Activated CD8-positive, alpha-beta T cell treated with anti-CD3 and anti-CD28 coated beads, Interleukin-2, amount 10 ng/mL, durations not matched to agents 7 days and 5 days (primary cell): ENCODE measurements at regions of chr11 and their contacts with region 1.

Region 1: DNA sequence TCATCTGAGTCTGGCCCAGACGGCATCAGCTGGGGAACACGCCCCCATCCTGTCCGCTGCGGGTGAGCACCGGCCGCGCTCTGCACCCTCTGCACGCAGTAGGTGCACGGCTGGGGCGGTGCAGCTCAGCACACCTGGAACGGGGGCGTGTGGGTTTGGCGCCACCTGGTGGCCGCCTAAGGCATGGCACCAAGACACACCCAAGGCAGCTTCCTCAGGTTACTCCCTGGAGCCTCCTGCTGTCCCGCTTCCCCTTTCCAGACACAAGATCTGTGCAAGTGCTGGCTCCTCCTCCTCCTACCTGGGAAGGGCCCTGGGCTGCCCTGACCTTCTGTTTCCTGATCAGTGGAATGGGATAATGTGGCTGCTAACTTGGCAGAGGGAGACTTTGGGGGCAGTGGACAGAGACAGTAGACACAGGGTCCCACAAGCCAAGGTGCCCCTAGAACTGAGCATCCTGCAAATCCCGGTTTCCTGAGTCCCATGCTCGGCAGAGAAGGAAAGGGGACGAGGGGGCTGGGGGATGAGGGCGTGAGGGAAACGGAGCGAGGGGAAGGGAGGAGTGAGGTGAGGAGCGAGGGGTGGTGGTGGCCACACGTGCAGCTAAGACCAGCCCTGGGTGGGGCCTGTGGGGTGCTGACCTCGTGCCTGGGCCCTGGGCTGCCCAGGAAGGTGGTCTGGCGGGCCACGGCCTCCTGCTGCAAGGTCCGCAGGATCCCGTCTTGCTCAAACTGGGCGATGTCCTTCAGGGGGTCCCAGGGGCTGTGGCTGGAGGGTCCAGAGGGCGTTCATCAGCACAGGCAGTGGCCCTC is 34.8 kb upstream of the CARS1 start:
- DNase-seq: peak; percentile 80
- ATAC-seq: peak; percentile 91
- H3K4me3 Mint-ChIP-seq: no peak overlapping the region
- H3K27ac Mint-ChIP-seq: peak overlapping the region; percentile 57
- H3K4me1 Mint-ChIP-seq: peaks cover 12% of the 10 kb centered on the region
- H3K27me3 Mint-ChIP-seq: no peaks in the 10 kb centered on the region

Region 2: DNA sequence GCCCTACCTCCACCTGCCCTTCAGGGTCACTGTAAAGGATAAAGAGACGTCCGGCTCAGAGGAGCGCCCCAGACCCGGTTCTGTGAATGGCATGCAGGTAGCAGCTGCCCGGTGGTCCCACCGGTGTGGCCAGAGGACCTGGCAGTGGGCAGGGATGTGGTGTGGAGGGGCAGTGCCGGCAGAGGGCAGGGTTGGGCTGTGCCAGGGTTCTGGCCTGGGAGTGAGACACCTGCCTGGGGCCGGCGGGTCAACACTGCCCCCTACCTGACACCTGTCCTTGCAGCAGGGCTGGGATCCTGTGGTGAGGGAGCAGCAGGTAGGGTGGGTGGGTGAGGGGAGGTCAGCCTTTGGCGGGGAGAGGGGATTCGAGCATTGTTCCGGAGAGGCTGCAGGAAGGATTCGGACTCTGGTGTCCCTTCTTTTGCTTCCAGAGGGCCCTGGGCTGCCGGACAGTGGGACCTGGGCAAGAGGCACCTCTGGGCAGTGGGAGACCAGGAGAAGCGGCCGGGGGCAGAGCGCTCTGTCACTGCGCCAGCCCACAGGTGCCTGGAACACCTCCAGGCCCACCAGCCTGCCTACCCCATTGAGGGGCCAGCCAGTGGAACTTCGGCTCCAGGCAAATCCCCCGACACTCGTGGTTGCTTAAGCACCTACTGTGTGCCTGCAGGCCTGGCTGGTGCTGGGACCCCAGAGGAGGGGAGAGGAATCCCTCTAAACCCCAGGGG is 161.1 kb before region 1 on chr11:
- CTCF ChIA-PET with region 1: interaction called, 25 read pairs
- POLR2A ChIA-PET with region 1: no interaction called
- DNase-seq: peak; percentile 72
- ATAC-seq: peak; percentile 23
- H3K4me3 Mint-ChIP-seq: peak overlapping the region; percentile 73
- H3K27ac Mint-ChIP-seq: peak overlapping the region; percentile 66
- H3K4me1 Mint-ChIP-seq: peaks cover 44% of the 10 kb centered on the region
- H3K27me3 Mint-ChIP-seq: peaks cover 26% of the 10 kb centered on the region

Region 3: DNA sequence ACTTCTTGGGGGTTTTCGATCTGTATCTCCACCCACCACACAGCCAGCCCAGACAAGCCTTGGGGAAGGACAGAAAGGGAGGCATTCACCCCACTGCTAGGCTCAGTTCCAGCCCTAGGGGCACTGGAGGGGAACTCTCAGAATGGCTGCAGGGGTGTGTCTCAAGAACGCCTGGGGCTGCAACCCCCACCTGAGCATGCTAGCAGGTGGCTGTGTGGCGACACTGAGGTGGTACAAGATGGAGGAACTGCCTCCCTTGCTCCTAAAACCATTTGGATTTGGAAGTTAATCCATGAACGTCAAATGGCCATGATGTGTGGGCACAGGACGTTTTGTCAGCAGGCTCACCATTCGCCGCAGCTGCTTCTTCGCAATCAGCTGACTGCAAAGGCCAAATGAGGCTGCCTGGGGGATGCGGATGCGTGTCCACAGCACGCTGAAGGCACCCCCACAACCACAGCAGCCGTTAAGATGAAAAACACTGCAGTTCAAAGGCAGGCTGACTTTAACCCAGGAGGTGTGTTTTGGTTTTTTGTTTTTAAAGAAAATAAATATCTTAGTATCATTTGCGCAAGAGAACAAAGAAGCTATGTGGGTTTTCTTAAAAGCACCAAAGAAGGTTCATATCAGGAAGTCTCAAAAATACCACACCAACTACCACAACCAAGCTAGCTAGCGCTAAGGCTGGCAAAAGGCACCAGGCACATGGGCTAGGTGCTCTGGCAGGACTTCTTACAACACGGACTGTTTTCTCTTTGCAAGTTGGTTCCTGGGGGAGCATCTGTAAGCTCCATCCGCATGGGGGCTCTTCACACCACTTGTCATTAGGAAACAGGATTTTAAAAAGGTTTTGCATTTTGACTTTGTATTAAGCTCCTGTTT is 77.7 kb before region 1 on chr11:
- CTCF ChIA-PET with region 1: interaction called, 39 read pairs
- POLR2A ChIA-PET with region 1: no interaction called
- DNase-seq: peak; percentile 94
- ATAC-seq: peak; percentile 84
- H3K4me3 Mint-ChIP-seq: peak overlapping the region; percentile 56
- H3K27ac Mint-ChIP-seq: peak overlapping the region; percentile 95
- H3K4me1 Mint-ChIP-seq: peaks cover 95% of the 10 kb centered on the region
- H3K27me3 Mint-ChIP-seq: no peaks in the 10 kb centered on the region

Region 4: GRCh38 chr11:3073029-3073435 is 19.0 kb before region 1 on chr11:
- CTCF ChIA-PET with region 1: interaction called, 12 read pairs
- POLR2A ChIA-PET with region 1: no interaction called
- DNase-seq: no peak
- ATAC-seq: no peak
- H3K4me3 Mint-ChIP-seq: no peak overlapping the region
- H3K27ac Mint-ChIP-seq: no peak overlapping the region
- H3K4me1 Mint-ChIP-seq: no peaks in the 10 kb centered on the region
- H3K27me3 Mint-ChIP-seq: peaks cover 2% of the 10 kb centered on the region

Region 5: DNA sequence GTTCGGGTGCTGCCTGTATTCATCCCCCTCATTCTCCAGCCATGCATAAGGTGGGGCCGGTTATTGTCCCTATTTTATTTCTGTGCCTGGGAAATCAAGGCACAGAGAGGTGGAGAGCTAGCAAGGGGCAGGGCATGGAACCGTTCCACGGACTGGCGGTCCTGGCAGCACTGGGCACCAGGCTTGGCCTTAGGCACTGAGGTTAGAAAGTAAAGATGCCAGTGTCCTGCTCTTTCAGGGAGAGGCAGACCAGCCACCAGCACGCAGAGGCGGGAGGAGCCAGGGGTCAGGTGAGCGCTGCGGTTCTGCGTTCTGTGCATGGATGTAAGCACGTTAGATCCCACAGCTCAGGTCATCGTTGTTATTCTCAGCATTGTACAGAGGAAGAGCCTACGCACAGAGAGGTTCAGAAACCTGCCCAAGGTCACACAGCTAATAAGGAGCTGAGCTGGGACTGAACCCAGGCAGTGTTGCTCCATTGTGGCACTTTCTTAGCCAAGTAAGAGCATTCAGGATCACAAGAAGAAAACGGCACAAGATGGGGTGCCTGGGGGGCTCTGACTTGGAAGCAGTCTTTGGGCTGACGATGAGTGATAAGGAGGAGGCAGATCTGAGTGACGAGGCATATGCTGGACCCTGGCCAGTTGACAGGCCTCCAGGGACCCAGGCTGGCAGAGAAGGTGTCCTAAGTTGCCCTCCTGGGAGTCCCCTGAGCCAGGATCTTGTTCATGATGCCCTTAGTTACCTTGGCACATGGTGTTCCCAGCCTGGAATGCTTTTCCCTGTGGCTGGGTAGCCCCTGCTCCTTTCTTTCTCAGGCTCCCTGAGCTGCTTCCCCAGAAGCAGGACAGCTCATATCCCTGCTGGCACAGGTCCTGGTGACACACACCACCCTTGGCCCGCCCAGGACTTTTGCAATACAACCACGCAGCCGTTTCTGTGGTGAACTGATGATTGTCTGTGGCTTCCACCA is 32.0 kb after region 1 on chr11:
- CTCF ChIA-PET with region 1: no interaction called
- POLR2A ChIA-PET with region 1: no interaction called
- DNase-seq: no peak
- ATAC-seq: no peak
- H3K4me3 Mint-ChIP-seq: no peak overlapping the region
- H3K27ac Mint-ChIP-seq: no peak overlapping the region
- H3K4me1 Mint-ChIP-seq: peaks cover 6% of the 10 kb centered on the region
- H3K27me3 Mint-ChIP-seq: no peaks in the 10 kb centered on the region